ENCODE measurements at regions of chr15 and their contacts with region 1.

Region 1: DNA sequence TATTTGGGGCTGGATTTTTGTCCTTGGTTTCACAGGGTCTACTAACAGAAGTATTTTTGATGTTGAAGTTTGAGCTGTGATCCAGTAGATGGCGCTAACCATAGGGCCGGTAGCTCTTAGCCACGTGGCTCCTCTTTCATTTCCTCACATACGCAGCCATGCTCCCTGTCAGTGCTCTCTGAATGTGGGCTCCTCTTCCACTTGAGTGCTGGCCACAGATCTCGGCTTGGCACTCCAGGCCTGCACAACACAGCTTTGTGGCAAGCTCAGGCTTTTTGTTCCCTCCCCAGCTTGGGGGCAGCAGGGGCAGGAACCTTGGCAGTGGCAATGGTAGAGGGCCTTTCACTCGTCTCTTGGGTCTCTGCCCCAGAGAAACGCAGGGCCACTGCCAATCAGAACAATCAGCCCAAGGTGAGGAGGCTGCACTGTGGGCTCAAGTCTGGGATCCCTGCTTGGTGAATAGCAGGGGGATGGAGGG is 18.6 kb upstream of the DNAAF4 start:
- DNase-seq: no peak
- ATAC-seq: no peak

Region 2: GRCh38 chr15:55366981-55367380 is 159.6 kb before region 1 on chr15:
- intact Hi-C with region 1: no loop called
- DNase-seq: no peak
- ATAC-seq: no peak

Region 3: DNA sequence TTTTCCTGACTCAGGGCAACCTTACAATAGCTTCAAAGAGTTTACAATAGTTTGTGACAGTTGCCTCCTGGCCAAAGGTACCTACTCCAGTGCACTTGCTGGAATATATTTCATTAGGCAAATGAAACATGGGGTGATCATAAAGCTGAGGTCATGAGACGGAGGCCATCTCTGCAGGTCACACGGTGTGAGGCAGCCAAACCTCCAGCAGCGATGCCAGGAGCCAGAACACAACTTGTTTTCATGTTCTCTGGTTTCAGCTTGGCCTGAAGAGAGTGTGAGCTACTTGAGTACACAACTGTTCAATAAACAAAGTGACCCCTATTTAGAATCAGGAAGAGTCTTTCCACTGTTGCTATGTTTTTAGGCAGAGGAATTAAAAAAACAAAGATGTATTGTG is 104.3 kb after region 1 on chr15:
- intact Hi-C with region 1: loop called (anchors 10 kb)
- DNase-seq: no peak
- ATAC-seq: no peak